ENCODE measurements at regions of chr11 and their contacts with region 1.

Region 1: DNA sequence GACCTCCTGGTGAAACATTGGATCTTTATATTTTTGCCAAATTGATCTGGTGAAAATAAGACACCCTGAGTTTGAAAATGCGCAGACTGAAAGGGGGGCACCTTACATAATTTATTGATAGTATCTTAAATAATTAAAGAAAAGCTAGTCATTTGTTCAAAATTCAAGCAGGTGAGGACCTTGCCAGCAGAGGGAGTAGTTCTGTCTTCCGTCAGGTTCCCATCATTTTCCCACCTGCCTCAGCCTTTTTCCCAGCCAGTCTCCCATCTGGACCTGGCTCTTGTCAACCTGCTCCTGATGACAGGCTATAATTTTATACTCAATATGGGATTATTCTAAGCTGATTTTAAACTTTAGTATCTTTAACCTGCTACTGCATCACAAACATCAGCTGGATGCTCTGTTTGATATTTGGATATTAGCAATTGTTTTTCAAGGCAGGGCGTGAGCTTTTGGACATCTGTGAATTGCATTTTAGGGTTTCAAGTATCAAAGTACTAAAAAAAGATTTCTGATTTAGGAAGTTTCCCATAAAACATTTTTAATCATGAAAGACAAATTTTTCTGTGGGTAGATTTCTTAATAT is 132.0 kb downstream of the ELP4 start:
- DNase-seq: peak; percentile 1 to 64
- ATAC-seq: 0 out of 6 replicates have a peak, but pooled peaks of 1 of the 2 experiments have one; percentile 42
- H3K4me3 ChIP-seq: no peak overlapping the region
- H3K27ac ChIP-seq: no peak overlapping the region
- H3K4me1 ChIP-seq: peaks cover 38% of the 10 kb centered on the region
- CTCF ChIP-seq: peak; percentile 80
- EP300 ChIP-seq: no peak
- POLR2A ChIP-seq: no peak
- RAD21 ChIP-seq: peak; percentile 68 to 70

Region 2: DNA sequence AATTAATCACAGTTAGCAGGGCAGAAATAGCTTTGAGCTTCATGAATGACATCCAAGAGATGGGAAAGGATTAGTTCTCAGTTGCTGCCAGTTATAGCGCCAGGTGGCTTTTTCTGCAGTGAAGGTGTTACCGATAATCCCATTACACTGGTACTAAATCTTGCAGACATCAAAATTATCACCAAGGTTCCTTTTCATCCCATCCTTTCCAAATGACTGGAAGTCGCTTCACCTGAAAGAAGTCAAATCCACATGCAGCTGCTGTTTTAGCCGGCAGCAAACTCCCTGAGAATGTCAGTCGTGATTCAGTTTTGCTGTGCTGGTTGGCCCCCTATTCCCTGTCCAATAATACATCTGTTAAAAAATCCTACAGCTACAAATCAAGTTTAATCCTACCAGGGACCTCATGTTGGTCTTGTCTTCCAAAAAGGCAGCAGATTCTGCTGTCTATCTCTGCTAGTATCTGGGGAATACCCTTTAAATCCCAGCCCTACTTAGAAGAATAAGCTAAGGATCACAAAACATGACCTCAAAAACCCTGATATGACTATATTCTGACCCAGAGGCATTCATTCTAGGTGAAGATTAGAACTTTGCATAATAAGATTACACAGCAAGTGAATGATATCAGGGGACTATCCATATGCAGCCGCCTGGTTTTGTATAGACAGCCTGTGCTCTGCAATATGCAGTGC is 163.9 kb before region 1 on chr11:
- CTCF ChIA-PET with region 1: no interaction called
- POLR2A ChIA-PET with region 1: no interaction called
- DNase-seq: no peak
- ATAC-seq: no peak
- H3K4me3 ChIP-seq: no peak overlapping the region
- H3K27ac ChIP-seq: no peak overlapping the region
- H3K4me1 ChIP-seq: no peaks in the 10 kb centered on the region
- CTCF ChIP-seq: no peak
- EP300 ChIP-seq: no peak
- POLR2A ChIP-seq: no peak
- RAD21 ChIP-seq: no peak

Region 3: DNA sequence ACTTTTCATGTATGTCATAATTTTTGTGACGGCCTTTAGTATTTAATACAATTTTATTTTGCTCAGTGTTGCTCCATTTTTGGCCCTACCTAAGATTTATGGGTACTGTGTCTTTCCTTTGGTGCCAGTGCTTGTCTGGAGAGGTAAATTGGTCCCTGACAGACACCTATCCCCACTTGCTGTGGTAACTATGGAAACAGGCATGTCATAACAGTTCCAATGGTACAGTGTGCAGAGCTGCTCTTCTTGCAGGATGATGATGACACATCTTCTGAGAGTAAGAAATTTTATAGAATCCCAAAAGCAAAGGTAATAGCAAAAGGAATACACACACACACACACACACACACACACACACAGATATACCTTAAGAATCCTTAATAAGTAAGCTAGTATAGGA is 13.5 kb before region 1 on chr11:
- CTCF ChIA-PET with region 1: interaction called, 13 read pairs
- POLR2A ChIA-PET with region 1: no interaction called
- DNase-seq: no peak
- ATAC-seq: no peak
- H3K4me3 ChIP-seq: no peak overlapping the region
- H3K27ac ChIP-seq: no peak overlapping the region
- H3K4me1 ChIP-seq: no peaks in the 10 kb centered on the region
- CTCF ChIP-seq: no peak
- EP300 ChIP-seq: no peak
- POLR2A ChIP-seq: no peak
- RAD21 ChIP-seq: no peak

Region 4: DNA sequence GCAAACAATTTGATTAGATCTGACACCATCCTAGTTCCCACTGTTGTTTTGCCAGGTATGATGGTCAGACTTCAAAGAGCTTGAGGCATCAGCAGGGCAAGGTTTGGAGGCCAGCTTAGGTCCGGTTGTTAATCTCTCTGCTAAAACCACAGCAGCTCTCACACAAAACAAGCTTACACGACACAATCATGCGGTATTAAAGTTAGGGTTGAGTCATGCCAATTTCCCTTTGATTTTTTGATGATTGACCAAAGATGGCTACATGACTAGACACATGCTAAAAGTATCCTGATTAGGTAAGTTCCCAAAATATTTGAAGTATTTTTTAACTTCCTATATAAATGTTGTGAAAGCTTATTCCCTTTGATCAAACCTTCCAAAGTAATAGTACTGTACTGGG is 13.9 kb after region 1 on chr11:
- CTCF ChIA-PET with region 1: interaction called, 33 read pairs
- POLR2A ChIA-PET with region 1: no interaction called
- DNase-seq: peak; percentile 1 to 60
- ATAC-seq: peak; percentile 76 to 84
- H3K4me3 ChIP-seq: no peak overlapping the region
- H3K27ac ChIP-seq: peak overlapping the region; percentile 58 to 70; a peak in 4 of 6 replicates
- H3K4me1 ChIP-seq: peaks cover 40% of the 10 kb centered on the region
- CTCF ChIP-seq: no peak
- EP300 ChIP-seq: peak; percentile 79 to 86; a peak in 4 of 5 replicates
- POLR2A ChIP-seq: no peak
- RAD21 ChIP-seq: 0 out of 5 replicates have a peak, but pooled peaks of 1 of the 2 experiments have one; percentile 22

Region 5: GRCh38 chr11:31958076-31958735 is 316.6 kb after region 1 on chr11:
- CTCF ChIA-PET with region 1: interaction called, 18 read pairs
- POLR2A ChIA-PET with region 1: no interaction called
- DNase-seq: peak; percentile 38 to 39
- ATAC-seq: peak; percentile 69 to 93; a peak in 4 of 6 replicates
- H3K4me3 ChIP-seq: no peak overlapping the region
- H3K27ac ChIP-seq: no peak overlapping the region
- H3K4me1 ChIP-seq: no peaks in the 10 kb centered on the region
- CTCF ChIP-seq: peak; percentile 59
- EP300 ChIP-seq: no peak
- POLR2A ChIP-seq: no peak
- RAD21 ChIP-seq: peak; percentile 56 to 71

Measured in A549 (cell line).